ENCODE measurements at regions of chr4 and their contacts with region 1.

Region 1: DNA sequence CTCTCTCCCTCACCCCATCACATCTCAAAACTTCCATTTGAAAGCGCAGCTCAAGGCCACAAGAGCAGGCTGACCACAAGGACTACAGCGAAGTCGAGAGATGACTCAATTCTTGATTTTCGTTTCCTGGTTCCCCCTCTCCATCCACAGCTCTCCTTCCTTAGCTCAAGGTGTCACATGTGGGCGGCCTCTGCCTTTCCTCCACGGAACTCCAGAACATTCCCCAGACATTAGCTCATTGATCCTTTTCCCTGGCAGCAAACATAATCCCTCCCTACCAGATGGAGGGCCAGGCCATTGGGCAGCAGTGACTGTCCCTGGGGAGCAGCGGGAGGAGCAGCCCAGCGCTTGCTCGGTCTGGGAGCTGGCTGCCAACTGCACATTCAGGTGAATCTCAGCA is 56.3 kb downstream of the CCDC149 start:
- DNase-seq: peak in 1 of 2 donors; percentile 90
- H3K4me3 ChIP-seq: no peak overlapping the region
- H3K27ac ChIP-seq: peak overlapping the region; percentile 72 to 73
- H3K4me1 ChIP-seq: peaks cover 14 to 47% of the 10 kb centered on the region in 2 donors
- H3K27me3 ChIP-seq: no peaks in the 10 kb centered on the region
- CTCF ChIP-seq: no peak

Region 2: GRCh38 chr4:24472514-24473308 is 383.9 kb before region 1 on chr4:
- intact Hi-C with region 1: loop called (anchors 5 kb)
- DNase-seq: peak; percentile 31 to 88
- H3K4me3 ChIP-seq: peak overlapping the region; percentile 60 to 81
- H3K27ac ChIP-seq: peak overlapping the region; percentile 31 to 57
- H3K4me1 ChIP-seq: peaks cover 8 to 15% of the 10 kb centered on the region in 2 donors
- H3K27me3 ChIP-seq: no peaks in the 10 kb centered on the region
- CTCF ChIP-seq: peak; percentile 54 to 73 (median 66)

Region 3: GRCh38 chr4:24594891-24595290 is 261.7 kb before region 1 on chr4:
- intact Hi-C with region 1: no loop called
- DNase-seq: no peak
- H3K4me3 ChIP-seq: no peak overlapping the region
- H3K27ac ChIP-seq: no peak overlapping the region
- H3K4me1 ChIP-seq: no peaks in the 10 kb centered on the region
- H3K27me3 ChIP-seq: no peaks in the 10 kb centered on the region
- CTCF ChIP-seq: no peak

Region 4: DNA sequence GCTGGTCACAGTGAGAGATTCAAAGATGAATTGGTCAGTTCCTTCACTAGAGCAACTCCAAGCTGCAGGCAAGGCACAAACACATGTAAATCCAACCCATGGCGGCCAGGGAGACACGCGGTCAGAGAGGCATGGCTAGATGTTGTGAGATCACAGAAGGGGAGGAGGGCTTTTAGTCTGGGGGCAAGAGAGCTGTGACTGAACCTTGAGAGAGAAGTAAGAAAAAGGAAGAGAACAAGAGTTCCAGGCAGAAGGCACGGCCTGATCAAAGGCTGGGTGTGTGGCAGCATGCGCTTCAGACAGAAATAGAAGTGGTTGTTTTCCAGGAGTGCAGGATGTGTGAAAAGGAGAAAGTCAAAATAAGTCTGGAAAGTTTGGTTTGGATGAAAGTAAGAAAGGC is 40.4 kb after region 1 on chr4:
- intact Hi-C with region 1: loop called (anchors 5 kb)
- DNase-seq: no peak
- H3K4me3 ChIP-seq: no peak overlapping the region
- H3K27ac ChIP-seq: peak overlapping the region; percentile 73 to 74
- H3K4me1 ChIP-seq: peaks cover 0 to 13% of the 10 kb centered on the region in 2 donors
- H3K27me3 ChIP-seq: no peaks in the 10 kb centered on the region
- CTCF ChIP-seq: no peak

Region 5: GRCh38 chr4:24980064-24980690 is 123.6 kb after region 1 on chr4:
- intact Hi-C with region 1: no loop called
- DNase-seq: peak in 1 of 2 donors; percentile 75
- H3K4me3 ChIP-seq: peak overlapping the region; percentile 21 to 26
- H3K27ac ChIP-seq: peak overlapping the region; percentile 40 to 61
- H3K4me1 ChIP-seq: peaks cover 0 to 6% of the 10 kb centered on the region in 2 donors
- H3K27me3 ChIP-seq: no peaks in the 10 kb centered on the region
- CTCF ChIP-seq: peak; percentile 71 to 87 (median 80)

Region 6: GRCh38 chr4:25953740-25954139 is 1097.2 kb after region 1 on chr4:
- intact Hi-C with region 1: no loop called
- DNase-seq: no peak
- H3K4me3 ChIP-seq: no peak overlapping the region
- H3K27ac ChIP-seq: no peak overlapping the region
- H3K4me1 ChIP-seq: no peaks in the 10 kb centered on the region
- H3K27me3 ChIP-seq: no peaks in the 10 kb centered on the region
- CTCF ChIP-seq: no peak